ENCODE measurements at regions of chr15 and their contacts with region 1.

Region 1: DNA sequence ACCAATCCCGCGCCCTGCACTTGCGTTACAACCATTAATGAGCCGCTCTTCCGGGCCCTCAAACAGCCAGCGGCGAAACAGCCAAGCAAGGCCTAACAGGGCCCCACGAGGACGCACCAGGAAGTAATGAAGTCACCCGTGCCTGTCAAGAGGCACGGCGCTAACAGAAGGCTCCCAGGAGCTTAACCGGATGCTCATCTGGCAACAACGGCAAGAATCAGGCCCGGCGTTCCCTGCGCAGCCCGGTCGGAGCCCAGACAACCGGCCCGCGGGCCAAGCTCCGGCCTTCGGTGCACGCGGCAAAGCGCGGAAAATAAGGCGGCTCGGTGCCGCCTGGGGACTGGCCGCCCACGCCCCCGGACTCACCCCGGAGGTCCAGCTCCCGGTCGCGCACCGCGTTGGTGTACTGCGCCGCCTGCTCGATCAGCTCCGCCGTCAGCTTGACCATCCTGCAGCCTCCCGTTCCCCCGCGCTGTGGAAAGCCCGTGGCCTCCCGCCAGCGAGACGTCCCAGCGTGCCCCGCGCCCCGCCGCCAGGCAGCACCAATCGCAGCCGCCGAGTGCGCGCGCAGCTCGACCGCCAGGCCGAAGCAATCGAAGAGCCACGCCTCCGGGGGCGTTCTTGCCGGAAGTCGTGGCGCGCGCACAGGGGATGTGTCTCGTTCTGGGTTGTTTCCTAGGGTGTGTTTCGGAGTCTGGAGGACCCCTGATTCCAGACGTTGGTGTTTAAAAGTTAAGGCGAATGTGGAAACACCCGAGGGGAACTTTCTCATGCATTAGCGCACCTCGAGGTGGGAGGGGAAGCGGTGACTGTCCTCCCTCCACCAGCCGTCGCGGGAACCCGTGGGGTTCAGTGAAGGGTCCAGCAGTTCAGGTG is at the start of gene SNRPA1:
- DNase-seq: peak; percentile 99
- ATAC-seq: peak; percentile 84
- H3K4me3 Mint-ChIP-seq: peak within 1 kb of the TSS; percentile 79
- H3K27ac Mint-ChIP-seq: peak within 1 kb of the TSS; percentile 94
- H3K4me1 Mint-ChIP-seq: peaks cover 33% of the 10 kb centered on the region
- H3K27me3 Mint-ChIP-seq: no peaks in the 10 kb centered on the region
- total RNA-seq, gene SNRPA1: 167 to 185 TPM

Region 2: GRCh38 chr15:100602064-100602822 is 692.7 kb before region 1 on chr15 and contains the starts of genes ASB7 and LINS1:
- CTCF ChIA-PET with region 1: interaction called, 4 read pairs
- POLR2A ChIA-PET with region 1: interaction called, 3 read pairs
- intact Hi-C with region 1: loop called (anchors 1 to 2 kb)
- DNase-seq: peak; percentile 100
- ATAC-seq: peak; percentile 85
- H3K4me3 Mint-ChIP-seq: no peak within 1 kb of the TSS
- H3K27ac Mint-ChIP-seq: no peak within 1 kb of the TSS
- H3K4me1 Mint-ChIP-seq: peaks cover 58% of the 10 kb centered on the region
- H3K27me3 Mint-ChIP-seq: no peaks in the 10 kb centered on the region
- total RNA-seq, gene ASB7: 16.6 to 19.5 TPM
- total RNA-seq, gene LINS1: 41.7 to 43.8 TPM

Region 3: DNA sequence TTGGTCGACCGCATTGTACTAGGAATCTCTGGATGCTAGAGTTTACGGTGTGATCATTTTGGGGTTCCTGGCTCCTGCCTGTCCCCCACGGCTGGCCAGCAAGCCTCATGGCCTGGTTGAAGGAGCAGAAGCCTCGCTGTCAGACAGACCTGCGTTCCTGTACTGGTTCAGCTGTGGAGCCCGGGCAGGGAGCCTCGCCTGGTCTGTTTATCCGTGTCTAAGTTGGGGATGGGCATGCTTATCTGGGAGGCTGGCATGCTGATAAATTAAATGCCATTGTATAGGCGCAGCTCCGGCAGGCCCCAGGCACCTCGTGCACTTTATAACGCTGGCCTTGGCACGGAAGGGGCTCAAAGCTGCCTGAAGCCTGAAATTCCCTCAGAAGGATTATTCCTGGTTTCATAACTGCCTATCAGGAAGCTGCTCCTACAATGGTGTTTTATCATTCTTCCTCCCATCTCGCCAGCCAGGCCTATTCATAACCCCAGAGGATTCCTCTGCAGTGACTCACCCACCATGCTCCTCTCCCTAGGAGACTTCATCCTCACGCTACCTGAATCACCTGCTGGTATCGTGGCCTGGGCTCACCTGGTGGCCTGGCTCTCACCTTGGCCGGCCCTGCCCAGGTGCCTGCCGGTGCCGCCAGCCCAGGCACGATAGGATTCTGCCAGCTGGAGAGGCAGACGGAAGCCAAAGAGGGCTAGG is 581.7 kb before region 1 on chr15:
- CTCF ChIA-PET with region 1: no interaction called
- POLR2A ChIA-PET with region 1: no interaction called
- intact Hi-C with region 1: no loop called
- DNase-seq: no peak
- ATAC-seq: no peak
- H3K4me3 Mint-ChIP-seq: no peak overlapping the region
- H3K27ac Mint-ChIP-seq: no peak overlapping the region
- H3K4me1 Mint-ChIP-seq: no peaks in the 10 kb centered on the region
- H3K27me3 Mint-ChIP-seq: peaks cover 7% of the 10 kb centered on the region

Region 4: GRCh38 chr15:101232677-101233076 is 62.3 kb before region 1 on chr15:
- CTCF ChIA-PET with region 1: no interaction called
- POLR2A ChIA-PET with region 1: no interaction called
- intact Hi-C with region 1: no loop called
- DNase-seq: no peak
- ATAC-seq: no peak
- H3K4me3 Mint-ChIP-seq: no peak overlapping the region
- H3K27ac Mint-ChIP-seq: no peak overlapping the region
- H3K4me1 Mint-ChIP-seq: peaks cover 48% of the 10 kb centered on the region
- H3K27me3 Mint-ChIP-seq: no peaks in the 10 kb centered on the region

Region 5: GRCh38 chr15:101277038-101277882 is 17.7 kb before region 1 on chr15 and contains the start of gene SELENOS:
- CTCF ChIA-PET with region 1: interaction called, 31 read pairs
- POLR2A ChIA-PET with region 1: interaction called, 5 read pairs
- intact Hi-C with region 1: loop called (anchors 1 kb)
- DNase-seq: peak; percentile 93
- ATAC-seq: peak; percentile 92
- H3K4me3 Mint-ChIP-seq: peak within 1 kb of the TSS; percentile 89
- H3K27ac Mint-ChIP-seq: peak within 1 kb of the TSS; percentile 79
- H3K4me1 Mint-ChIP-seq: peaks cover 24% of the 10 kb centered on the region
- H3K27me3 Mint-ChIP-seq: no peaks in the 10 kb centered on the region
- total RNA-seq, gene SELENOS: 14.5 to 20.8 TPM

Region 6: GRCh38 chr15:101349549-101349890 is 54.6 kb after region 1 on chr15:
- CTCF ChIA-PET with region 1: no interaction called
- POLR2A ChIA-PET with region 1: no interaction called
- intact Hi-C with region 1: no loop called
- DNase-seq: no peak
- ATAC-seq: no peak
- H3K4me3 Mint-ChIP-seq: no peak overlapping the region
- H3K27ac Mint-ChIP-seq: no peak overlapping the region
- H3K4me1 Mint-ChIP-seq: no peaks in the 10 kb centered on the region
- H3K27me3 Mint-ChIP-seq: peaks cover 17% of the 10 kb centered on the region

Region 7: GRCh38 chr15:101501703-101502373 is 206.9 kb after region 1 on chr15:
- CTCF ChIA-PET with region 1: interaction called, 4 read pairs
- POLR2A ChIA-PET with region 1: no interaction called
- intact Hi-C with region 1: loop called (anchors 1 to 2 kb)
- DNase-seq: peak; percentile 75
- ATAC-seq: peak; percentile 94
- H3K4me3 Mint-ChIP-seq: peak overlapping the region; percentile 21
- H3K27ac Mint-ChIP-seq: no peak overlapping the region
- H3K4me1 Mint-ChIP-seq: peaks cover 14% of the 10 kb centered on the region
- H3K27me3 Mint-ChIP-seq: peaks cover 21% of the 10 kb centered on the region

Region 8: GRCh38 chr15:101578437-101578894 is 283.5 kb after region 1 on chr15:
- CTCF ChIA-PET with region 1: no interaction called
- POLR2A ChIA-PET with region 1: no interaction called
- intact Hi-C with region 1: no loop called
- DNase-seq: peak; percentile 17
- ATAC-seq: no peak
- H3K4me3 Mint-ChIP-seq: no peak overlapping the region
- H3K27ac Mint-ChIP-seq: no peak overlapping the region
- H3K4me1 Mint-ChIP-seq: no peaks in the 10 kb centered on the region
- H3K27me3 Mint-ChIP-seq: peaks cover 26% of the 10 kb centered on the region

Region 9: GRCh38 chr15:101652098-101652782 is 357.3 kb after region 1 on chr15 and contains the start of gene TM2D3:
- CTCF ChIA-PET with region 1: interaction called, 4 read pairs
- POLR2A ChIA-PET with region 1: interaction called, 3 read pairs
- intact Hi-C with region 1: loop called (anchors 1 kb)
- DNase-seq: peak; percentile 96
- ATAC-seq: peak; percentile 96
- H3K4me3 Mint-ChIP-seq: peak within 1 kb of the TSS; percentile 91
- H3K27ac Mint-ChIP-seq: peak within 1 kb of the TSS; percentile 97
- H3K4me1 Mint-ChIP-seq: peaks cover 43% of the 10 kb centered on the region
- H3K27me3 Mint-ChIP-seq: no peaks in the 10 kb centered on the region
- total RNA-seq, gene TM2D3: 34.3 to 35.9 TPM